Activated CD8-positive, alpha-beta T cell treated with anti-CD3 and anti-CD28 coated beads, Interleukin-2, amount 10 ng/mL, durations not matched to agents 7 days and 5 days (primary cell): ENCODE measurements at regions of chr4 and their contacts with region 1.

Region 1: DNA sequence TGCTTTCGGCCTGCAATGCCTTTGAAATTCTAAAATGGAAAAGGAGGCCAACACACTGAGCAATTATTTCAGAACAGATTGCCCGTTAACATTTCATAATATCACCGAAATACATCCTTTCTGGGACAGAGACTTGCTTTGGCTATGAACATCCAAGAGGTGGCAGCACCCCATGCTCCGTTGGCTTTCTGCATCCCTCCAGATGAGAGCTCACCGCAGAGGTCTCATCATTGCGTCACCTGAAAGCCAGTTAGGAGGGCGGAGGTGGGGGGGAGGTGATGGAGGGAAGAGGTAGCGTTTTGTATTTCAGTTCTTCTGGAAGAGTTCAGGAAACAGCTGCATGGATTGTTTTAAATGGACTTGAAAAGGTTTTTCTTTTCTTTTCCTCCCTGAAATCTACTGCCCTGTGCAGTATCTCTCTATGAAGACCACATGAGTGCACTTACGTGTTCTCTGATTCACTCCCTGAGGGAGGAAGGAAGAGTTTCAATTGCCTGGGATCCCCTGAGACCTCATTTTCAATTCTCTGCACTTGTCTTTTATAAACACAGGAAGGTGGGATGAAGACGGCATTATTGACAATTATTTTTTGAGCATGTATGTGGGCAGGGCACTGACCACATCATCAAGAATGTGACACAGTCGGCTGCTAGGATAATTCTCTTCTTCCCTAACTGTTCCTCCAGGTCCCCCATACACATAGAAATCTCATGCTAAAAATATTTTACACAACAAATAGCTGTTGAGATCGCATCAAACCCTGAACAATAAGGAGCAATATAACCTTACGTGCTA is 166.9 kb upstream of the PGRMC2 start:
- DNase-seq: peak; percentile 80
- ATAC-seq: peak; percentile 93
- H3K4me3 Mint-ChIP-seq: no peak overlapping the region
- H3K27ac Mint-ChIP-seq: no peak overlapping the region
- H3K4me1 Mint-ChIP-seq: peaks cover 7% of the 10 kb centered on the region
- H3K27me3 Mint-ChIP-seq: peaks cover 2% of the 10 kb centered on the region

Region 2: DNA sequence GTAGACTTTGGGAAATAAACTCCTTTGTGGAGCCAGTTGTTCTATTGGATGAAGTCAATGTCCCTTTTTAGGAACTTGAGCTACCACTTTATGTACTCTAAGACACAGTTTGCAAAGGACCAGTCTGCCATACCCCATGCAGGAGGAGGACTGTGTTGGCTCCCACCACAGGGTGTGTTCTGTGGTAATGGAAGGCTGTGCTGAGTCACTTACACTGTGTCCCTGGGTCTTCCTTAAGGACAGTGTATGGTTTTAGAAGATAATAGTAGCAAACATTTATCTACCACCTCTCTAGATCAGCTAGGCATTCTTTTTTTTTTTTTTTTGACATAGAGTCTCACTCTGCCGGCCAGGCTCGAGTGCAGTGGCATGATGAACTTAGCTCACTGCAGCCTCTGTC is 17.1 kb after region 1 on chr4:
- CTCF ChIA-PET with region 1: interaction called, 10 read pairs
- POLR2A ChIA-PET with region 1: no interaction called
- DNase-seq: no peak
- ATAC-seq: no peak
- H3K4me3 Mint-ChIP-seq: no peak overlapping the region
- H3K27ac Mint-ChIP-seq: no peak overlapping the region
- H3K4me1 Mint-ChIP-seq: no peaks in the 10 kb centered on the region
- H3K27me3 Mint-ChIP-seq: no peaks in the 10 kb centered on the region

Region 3: DNA sequence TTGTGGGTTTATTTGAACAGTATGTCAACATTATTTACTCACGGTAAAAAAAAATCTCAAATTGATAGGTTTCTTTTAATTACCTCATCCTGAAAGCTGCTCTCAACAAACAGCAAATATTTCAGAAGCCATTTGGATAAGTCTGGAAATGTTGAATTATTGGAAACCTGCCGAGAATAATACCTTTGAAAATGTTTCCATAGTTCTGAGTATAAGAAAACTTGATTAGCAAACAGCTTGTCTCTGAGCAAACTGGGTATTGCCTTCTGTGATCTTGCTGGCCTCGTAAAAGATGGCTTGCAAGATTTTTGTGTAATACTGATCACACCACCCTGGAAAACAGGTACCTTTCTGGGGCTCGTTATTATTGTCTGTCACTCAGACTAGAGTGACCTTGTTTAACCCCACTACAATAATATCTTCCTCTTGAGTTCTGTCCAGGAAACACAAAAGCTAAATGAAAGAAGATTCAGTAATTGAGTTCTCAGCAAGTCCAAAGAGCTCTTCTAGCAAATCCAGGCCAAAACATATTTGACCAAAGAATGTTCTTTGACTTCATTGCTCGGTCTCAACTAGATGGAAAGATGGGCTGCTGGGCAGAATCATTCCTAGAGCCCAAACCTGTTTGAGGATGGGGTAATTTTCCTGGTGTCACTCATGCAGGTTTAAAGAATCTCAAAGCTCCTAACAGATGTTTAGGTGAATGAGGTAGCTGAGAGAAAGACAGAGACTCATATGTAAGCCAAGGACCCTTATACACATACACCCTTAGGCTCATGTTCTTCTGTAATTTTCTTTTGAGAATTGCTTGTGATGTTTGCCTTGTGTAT is 99.4 kb after region 1 on chr4:
- CTCF ChIA-PET with region 1: interaction called, 10 read pairs
- POLR2A ChIA-PET with region 1: no interaction called
- DNase-seq: no peak
- ATAC-seq: no peak
- H3K4me3 Mint-ChIP-seq: peak overlapping the region; percentile 84
- H3K27ac Mint-ChIP-seq: no peak overlapping the region
- H3K4me1 Mint-ChIP-seq: peaks cover 15% of the 10 kb centered on the region
- H3K27me3 Mint-ChIP-seq: peaks cover 21% of the 10 kb centered on the region